Dendritic cell treated with granulocyte-macrophage colony-stimulating factor and Interleukin-4, amounts not matched to agents 40 ng/mL and 50 ng/mL, for 4 days (primary cell): ENCODE measurements at regions of chr6 and their contacts with region 1.

Region 1: GRCh38 chr6:27753668-27754407 is 158.4 kb downstream of the OR2B2 start:
- H3K4me3 Mint-ChIP-seq: peak overlapping the region; percentile 52
- H3K27ac Mint-ChIP-seq: peak overlapping the region; percentile 21
- H3K4me1 Mint-ChIP-seq: peaks cover 26% of the 10 kb centered on the region
- H3K27me3 Mint-ChIP-seq: peaks cover 3% of the 10 kb centered on the region

Region 2: GRCh38 chr6:27177485-27178406 is 576.1 kb before region 1 on chr6:
- intact Hi-C with region 1: loop called (anchors 5 kb)
- H3K4me3 Mint-ChIP-seq: peak overlapping the region; percentile 85
- H3K27ac Mint-ChIP-seq: peak overlapping the region; percentile 90
- H3K4me1 Mint-ChIP-seq: peaks cover 10% of the 10 kb centered on the region
- H3K27me3 Mint-ChIP-seq: peaks cover 28% of the 10 kb centered on the region

Region 3: DNA sequence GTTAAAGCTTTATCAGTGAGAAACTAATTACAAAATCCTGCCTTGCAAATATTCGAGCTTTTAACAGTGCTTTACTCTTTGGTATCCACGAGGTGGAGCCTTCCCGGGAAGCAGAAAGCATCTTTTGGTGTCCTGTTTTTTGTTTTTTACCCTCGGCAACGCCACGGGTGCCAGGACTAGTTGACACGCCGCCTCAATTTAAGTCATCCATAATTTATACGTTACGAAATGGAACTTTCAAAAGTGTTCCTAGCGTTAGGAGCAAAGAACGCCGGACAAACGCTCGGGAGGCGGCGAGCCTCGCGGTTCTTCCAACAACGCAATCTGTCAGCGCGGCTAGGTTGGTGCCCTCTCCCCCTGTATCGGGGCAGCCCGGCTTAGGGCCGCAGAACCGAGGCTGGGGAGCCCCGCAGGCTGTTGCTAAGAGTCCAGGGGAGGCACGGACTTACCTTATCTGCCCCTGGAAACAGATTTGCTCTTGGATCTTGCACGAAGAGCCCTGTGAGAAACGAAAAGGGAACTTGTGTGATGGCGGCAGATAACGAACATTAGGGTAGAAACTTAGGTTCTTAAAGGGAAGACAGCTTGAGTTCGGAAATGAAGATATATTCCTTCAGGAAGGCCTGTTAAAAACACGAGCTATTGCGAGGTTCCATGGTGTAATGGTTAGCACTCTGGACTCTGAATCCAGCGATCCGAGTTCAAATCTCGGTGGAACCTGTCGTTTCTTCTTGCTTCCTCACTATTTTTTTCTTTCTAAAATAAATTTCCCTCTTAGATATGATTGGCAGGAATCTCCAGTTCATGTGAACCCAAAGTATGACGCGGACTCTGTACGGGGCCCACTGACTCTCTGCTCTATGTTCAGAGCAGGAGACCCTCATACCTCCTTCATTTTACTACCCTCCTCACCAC is 234.7 kb before region 1 on chr6:
- intact Hi-C with region 1: loop called (anchors 1 kb)
- H3K4me3 Mint-ChIP-seq: peak overlapping the region; percentile 82
- H3K27ac Mint-ChIP-seq: peak overlapping the region; percentile 81
- H3K4me1 Mint-ChIP-seq: no peaks in the 10 kb centered on the region
- H3K27me3 Mint-ChIP-seq: peaks cover 33% of the 10 kb centered on the region

Region 4: DNA sequence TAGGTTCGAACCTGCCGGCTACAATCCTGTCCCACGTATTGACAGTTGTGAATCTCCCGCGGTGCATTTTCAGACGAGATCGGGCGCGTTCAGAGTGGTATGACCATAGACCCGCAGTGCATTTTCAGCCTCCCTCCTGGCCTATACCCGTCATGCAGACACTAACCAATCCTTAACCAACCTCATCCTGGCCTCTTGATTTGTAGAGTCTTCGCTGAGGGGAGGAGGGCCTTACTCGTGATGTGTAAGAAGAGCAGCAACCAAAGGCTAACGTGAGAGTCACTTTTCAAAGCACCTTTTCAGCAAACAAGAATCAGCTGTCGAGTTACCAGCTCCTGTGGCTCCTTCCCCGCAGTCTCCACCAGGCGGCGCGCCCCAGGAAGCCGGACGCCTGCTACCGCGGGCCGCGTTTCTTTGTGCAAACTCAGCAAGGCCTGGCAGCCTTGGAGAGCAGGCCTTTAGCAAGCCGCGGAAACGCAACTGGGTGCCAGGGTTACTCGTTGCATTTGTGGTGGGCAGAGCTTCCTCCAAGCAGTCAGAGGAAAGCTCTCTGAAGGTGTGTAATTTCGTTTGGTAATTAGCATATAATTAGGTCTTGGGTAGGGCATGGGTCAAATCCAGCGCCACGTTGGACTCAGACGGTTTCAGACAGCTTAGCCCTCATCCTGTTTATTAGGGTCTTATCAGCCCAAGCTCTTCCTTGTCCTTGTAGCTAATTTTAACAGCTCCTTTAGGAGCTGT is 18.6 kb after region 1 on chr6:
- intact Hi-C with region 1: loop called (anchors 2 kb)
- H3K4me3 Mint-ChIP-seq: no peak overlapping the region
- H3K27ac Mint-ChIP-seq: peak overlapping the region; percentile 80
- H3K4me1 Mint-ChIP-seq: peaks cover 52% of the 10 kb centered on the region
- H3K27me3 Mint-ChIP-seq: no peaks in the 10 kb centered on the region

Region 5: GRCh38 chr6:27825025-27825793 is 71.4 kb after region 1 on chr6:
- intact Hi-C with region 1: no loop called
- H3K4me3 Mint-ChIP-seq: peak overlapping the region; percentile 83
- H3K27ac Mint-ChIP-seq: peak overlapping the region; percentile 94
- H3K4me1 Mint-ChIP-seq: peaks cover 10% of the 10 kb centered on the region
- H3K27me3 Mint-ChIP-seq: no peaks in the 10 kb centered on the region